ENCODE measurements at regions of chr17 and their contacts with region 1.

Region 1: GRCh38 chr17:15384142-15384787 is 42.9 kb upstream of the TEKT3 start:
- DNase-seq: peak in 4 of 10 donors; percentile 23 to 57 (median 36)
- H3K4me3 ChIP-seq: peak overlapping the region in 58 of 59 donors; percentile 6 to 66 (median 44)
- H3K27ac ChIP-seq: peak overlapping the region in 51 of 59 donors; percentile 12 to 87 (median 73)
- H3K27me3 ChIP-seq: no peaks in the 10 kb centered on the region
- CTCF ChIP-seq: no peak

Region 2: DNA sequence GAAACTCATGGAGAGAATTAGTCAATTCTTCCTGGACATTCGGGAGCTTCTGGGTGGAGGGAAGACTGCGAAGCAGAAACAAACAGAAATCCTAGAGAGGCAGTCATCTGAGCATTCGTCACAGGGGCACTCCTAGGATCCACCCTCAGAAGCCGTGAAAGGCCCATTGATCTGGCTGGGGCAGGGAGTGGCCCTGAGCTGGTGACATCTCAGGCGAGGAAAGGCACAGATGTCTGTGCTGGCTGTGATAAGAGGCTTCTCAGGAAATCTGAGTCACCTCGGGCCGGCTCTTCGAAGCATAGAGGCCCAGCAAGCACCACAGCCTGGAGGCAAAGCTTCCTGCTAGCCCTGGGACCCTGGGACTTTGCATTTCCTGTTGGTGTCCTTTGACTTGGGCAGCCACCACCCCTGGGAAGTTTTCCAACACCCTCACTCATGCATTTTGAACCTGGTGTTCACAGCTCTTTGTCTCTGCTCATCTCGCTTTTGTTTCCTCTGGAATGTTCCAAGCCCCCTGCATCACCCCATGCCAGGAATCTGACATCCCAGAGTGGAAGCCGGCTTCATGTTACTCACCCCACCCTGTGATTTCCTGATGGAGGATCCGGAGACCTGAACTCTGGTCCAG is 106.5 kb after region 1 on chr17:
- intact Hi-C with region 1: loop called in 1 of 2 experiments (anchors 10 kb)
- DNase-seq: peak; percentile 9 to 80 (median 72)
- H3K4me3 ChIP-seq: peak overlapping the region in 8 of 59 donors; percentile 0 to 35 (median 16)
- H3K27ac ChIP-seq: peak overlapping the region; percentile 18 to 94 (median 86)
- H3K27me3 ChIP-seq: no peaks in the 10 kb centered on the region
- CTCF ChIP-seq: peak in 5 of 56 donors; percentile 5 to 25 (median 15)